Cardiac septum (tissue), 1 donor: ENCODE measurements at regions of chr3 and their contacts with region 1.

Region 1: DNA sequence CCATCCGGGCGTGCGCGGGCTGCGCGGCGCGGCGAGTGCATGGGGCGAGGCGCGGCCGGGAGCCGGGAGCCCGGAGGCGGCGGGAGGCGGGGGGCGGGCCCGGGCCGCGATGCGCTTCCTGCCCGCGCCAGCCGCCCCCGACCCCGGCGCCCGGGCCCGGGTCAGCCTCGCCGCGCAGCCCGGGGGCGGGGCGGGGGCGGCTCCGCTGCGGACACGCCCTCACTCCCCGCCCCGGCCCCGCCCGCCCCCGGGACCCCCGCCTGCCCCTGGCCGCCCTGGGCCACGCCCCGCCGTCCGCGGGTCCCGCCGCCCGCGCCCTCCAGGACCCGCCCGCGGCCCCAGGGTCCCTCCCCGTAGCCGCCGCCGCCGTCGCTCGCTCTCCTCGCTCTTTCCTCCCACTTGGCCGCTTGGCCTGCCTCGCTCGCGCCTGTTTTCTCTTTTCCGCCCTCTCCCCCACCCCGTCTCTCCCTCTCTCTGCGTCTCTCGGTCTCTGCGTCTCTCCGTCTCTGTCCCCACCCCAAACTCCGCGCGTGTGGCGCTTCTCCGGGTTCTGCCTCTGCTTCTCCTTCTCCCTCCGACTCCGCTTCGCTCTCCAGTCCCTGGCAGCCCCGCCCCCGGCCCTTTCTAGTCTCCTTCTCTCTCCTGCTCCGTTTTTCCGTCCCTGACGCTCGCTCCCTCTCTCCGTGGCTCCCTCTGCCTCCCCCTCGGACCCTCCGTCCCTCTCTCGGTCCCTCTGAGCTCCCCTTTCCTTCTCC is at the start of gene PLXND1:
- DNase-seq: no peak
- total RNA-seq, gene PLXND1: 54.8 TPM

Region 2: GRCh38 chr3:129383292-129383860 is 223.4 kb before region 1 on chr3:
- intact Hi-C with region 1: loop called (anchors 10 kb)
- DNase-seq: no peak

Region 3: DNA sequence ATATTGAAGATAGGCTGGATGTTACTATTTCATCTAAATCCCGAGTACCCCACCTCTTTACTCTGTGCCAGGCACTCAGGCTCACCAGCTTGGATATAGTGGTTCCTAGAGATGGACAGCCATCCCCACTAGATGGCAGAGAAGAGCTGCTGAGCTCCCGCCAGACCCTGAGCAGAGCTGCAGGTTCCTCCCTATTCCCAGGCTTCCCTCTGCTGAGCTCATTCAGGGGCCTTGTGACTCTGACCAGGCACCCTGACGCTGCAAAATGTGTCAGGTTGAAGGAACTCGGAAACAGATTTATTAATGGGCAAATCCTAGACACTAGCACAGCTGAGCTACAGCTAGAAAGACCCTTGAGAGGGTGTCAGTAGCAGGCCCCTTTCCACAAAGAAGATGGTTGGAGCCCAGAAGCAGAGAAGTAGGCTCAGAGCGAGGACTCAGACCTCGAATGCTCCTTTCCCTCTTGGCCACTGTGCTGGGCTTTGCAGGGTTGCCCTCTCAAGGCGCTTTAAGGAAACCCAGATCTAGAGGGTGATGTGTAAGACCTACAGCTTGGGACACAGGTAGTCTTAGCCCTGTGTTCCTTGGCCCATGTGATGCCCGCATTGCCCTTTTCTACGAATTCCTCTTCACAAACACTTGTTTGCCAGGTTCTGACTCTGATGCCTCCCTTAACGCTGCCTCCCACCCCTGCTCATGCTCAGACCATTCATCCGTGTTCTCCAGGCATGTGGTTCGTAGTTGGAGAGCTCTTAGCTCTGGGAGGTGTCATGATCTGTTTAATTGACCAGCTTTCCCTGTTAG is 116.4 kb before region 1 on chr3:
- intact Hi-C with region 1: loop called (anchors 5 kb)
- DNase-seq: peak; percentile 92

Region 4: DNA sequence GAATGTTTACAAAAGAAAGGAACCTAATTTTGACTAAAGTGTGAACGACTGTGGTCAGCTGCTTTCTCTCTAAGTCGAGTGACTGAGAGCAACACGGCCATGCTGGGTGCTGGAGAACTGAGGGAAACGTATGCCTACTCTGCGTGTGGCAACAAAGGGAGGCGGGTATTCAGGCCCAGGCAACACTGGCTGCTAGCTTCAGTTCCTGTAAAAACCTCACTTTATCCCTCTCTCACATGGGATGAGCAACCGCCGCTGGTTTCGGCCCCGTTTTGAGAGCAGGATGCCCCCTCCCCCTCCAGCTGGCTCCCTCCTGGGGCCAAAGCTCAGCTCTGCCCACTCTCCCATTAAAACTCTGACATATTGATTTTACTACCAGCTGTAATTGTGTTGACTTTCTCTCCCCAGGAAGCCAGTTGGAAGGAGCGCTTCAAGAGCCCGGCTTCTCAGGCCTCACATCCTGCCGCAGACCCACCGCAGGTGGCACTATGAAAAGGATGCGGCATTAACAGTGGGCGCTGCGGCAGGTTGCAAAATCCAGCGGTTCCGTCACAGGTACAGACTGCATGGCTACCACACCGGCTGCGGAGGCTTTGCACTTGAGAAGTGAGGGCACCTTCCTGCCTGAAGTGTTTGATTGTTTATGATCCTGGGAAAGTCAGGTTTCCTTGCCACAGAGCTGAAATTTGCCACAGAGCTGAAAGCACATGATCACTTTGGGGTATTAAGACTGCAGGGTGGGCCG is 13.0 kb before region 1 on chr3:
- intact Hi-C with region 1: loop called (anchors 2 kb)
- DNase-seq: no peak